Naive thymus-derived CD4-positive, alpha-beta T cell (primary cell): ENCODE measurements at regions of chr19 and their contacts with region 1.

Region 1: DNA sequence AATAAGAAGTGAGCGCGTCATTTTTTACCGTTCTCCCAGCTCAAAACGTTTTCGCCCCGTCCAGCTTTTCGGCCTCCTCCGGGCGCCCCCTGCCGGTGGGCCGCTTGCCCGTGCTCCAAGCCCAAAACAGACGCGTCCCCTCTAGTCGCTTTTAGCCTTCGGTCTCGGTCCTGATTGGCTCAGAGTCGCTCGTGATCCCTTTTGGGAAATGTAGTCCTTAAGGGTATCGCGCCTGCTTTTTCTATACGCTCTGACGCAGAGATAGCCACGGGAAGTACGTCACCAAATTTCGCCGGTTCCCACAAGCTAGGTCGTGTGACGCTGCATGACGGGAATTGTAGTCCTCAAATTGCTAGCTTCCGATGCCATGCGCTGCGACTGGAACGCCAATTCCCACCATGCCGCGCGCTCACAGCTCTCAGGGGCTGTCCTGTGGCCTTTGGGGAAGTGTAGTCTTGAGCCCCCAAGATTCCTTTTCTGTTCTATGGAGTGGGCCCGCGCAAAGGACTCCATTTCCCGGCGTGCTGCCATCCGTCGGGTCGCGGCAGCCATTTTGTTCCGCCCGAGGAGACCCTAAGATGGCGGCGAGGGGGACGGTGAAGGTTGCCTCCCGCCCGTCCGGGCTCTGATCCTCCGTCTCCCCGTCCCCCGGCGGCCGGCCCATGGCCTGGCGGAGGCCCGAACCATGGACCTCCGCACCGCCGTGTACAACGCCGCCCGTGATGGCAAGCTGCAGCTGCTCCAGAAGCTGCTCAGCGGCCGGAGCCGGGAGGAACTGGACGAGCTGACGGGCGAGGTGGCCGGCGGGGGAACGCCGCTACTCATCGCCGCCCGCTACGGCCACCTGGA is at the start of gene FEM1A:
- DNase-seq: peak; percentile 93 to 100 (median 99)
- ATAC-seq: peak; percentile 96
- H3K4me3 ChIP-seq: peak within 1 kb of the TSS; percentile 72
- H3K4me3 Mint-ChIP-seq: peak within 1 kb of the TSS; percentile 75 to 90 (median 87)
- H3K27ac ChIP-seq: peak within 1 kb of the TSS; percentile 92
- H3K27ac Mint-ChIP-seq: peak within 1 kb of the TSS; percentile 46 to 94 (median 85)
- H3K4me1 ChIP-seq: peaks cover 0 to 7% of the 10 kb centered on the region in 2 donors
- H3K4me1 Mint-ChIP-seq: peaks cover 7 to 46% (median 29%) of the 10 kb centered on the region in 7 donors
- H3K27me3 ChIP-seq: no peaks in the 10 kb centered on the region
- H3K27me3 Mint-ChIP-seq: no peaks in the 10 kb centered on the region
- total RNA-seq, gene FEM1A: 10.2 to 17.2 (median 14.4) TPM

Region 2: GRCh38 chr19:3185482-3186376 is 1605.7 kb before region 1 on chr19 and contains the start of gene NCLN:
- CTCF ChIA-PET with region 1: no interaction called
- POLR2A ChIA-PET with region 1: no interaction called
- intact Hi-C with region 1: loop called in 1 of 2 experiments (anchors 5 kb)
- DNase-seq: peak; percentile 92 to 98 (median 95)
- ATAC-seq: peak; percentile 94
- H3K4me3 ChIP-seq: peak within 1 kb of the TSS; percentile 71
- H3K4me3 Mint-ChIP-seq: peak within 1 kb of the TSS; percentile 86 to 99 (median 94)
- H3K27ac ChIP-seq: peak within 1 kb of the TSS; percentile 74
- H3K27ac Mint-ChIP-seq: peak within 1 kb of the TSS; percentile 89 to 99 (median 91)
- H3K4me1 ChIP-seq: peaks cover 53 to 63% of the 10 kb centered on the region in 2 donors
- H3K4me1 Mint-ChIP-seq: peaks cover 43 to 66% (median 54%) of the 10 kb centered on the region in 7 donors
- H3K27me3 ChIP-seq: no peaks in the 10 kb centered on the region
- H3K27me3 Mint-ChIP-seq: peaks cover 0 to 2% (median 0%) of the 10 kb centered on the region in 5 donors
- total RNA-seq, gene NCLN: 45.4 to 64.7 (median 53.7) TPM

Region 3: DNA sequence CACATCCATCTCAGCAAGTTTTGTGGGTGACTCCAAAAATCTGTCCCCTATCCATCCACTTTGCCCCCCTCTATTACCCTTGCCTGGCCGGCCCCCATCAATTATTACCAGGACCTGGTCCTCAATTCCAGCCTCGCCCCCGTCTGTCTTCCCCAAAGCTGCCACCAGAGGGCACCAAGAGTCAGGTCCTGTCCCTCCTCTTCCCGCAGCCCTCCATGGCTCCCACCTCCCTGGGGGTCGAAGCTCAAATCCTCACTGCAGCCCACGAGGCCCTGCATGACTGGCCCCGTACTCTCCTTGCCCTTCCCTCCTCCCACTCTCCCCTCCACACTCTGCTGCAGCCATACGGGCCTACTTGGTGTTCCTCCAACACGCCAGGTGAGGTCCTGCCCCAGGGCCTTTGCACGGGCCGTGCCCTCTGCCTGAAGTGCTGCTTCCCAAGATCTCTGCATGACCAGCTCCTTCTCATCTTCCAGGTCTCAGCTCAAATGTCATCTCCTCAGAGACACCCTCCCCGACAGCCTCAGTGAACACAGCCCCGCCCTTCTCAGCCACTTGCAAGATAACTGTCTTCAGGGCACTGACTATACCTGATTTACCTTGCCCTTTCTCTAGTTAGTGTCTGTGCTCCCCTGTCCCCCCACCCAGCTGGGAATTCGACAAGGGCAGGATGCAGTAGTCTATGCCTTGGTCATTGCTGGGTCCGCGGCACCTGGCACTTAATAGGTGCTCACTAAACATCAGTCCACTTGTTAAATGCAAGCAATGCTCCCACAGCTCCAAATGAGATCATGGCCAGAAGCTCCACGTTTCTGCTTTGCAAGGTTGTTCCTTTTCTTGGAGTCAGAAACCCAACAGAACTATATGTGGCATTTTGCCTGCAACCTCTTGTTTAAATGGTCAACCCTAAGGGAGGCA is 215.1 kb before region 1 on chr19:
- CTCF ChIA-PET with region 1: interaction called, 3 read pairs
- POLR2A ChIA-PET with region 1: no interaction called
- intact Hi-C with region 1: loop called (anchors 5 kb)
- DNase-seq: peak; percentile 20 to 75 (median 56)
- ATAC-seq: peak; percentile 67
- H3K4me3 ChIP-seq: no peak overlapping the region
- H3K4me3 Mint-ChIP-seq: no peak overlapping the region
- H3K27ac ChIP-seq: no peak overlapping the region
- H3K27ac Mint-ChIP-seq: peak overlapping the region in 1 of 9 donors; percentile 41
- H3K4me1 ChIP-seq: no peaks in the 10 kb centered on the region
- H3K4me1 Mint-ChIP-seq: peaks cover 0 to 3% (median 0%) of the 10 kb centered on the region in 7 donors
- H3K27me3 ChIP-seq: no peaks in the 10 kb centered on the region
- H3K27me3 Mint-ChIP-seq: peaks cover 29 to 56% (median 45%) of the 10 kb centered on the region in 5 donors

Region 4: GRCh38 chr19:4622695-4623421 is 168.5 kb before region 1 on chr19:
- CTCF ChIA-PET with region 1: no interaction called
- POLR2A ChIA-PET with region 1: no interaction called
- intact Hi-C with region 1: no loop called
- DNase-seq: no peak
- ATAC-seq: no peak
- H3K4me3 ChIP-seq: no peak overlapping the region
- H3K4me3 Mint-ChIP-seq: no peak overlapping the region
- H3K27ac ChIP-seq: no peak overlapping the region
- H3K27ac Mint-ChIP-seq: no peak overlapping the region
- H3K4me1 ChIP-seq: no peaks in the 10 kb centered on the region
- H3K4me1 Mint-ChIP-seq: peaks cover 0 to 3% (median 0%) of the 10 kb centered on the region in 7 donors
- H3K27me3 ChIP-seq: no peaks in the 10 kb centered on the region
- H3K27me3 Mint-ChIP-seq: peaks cover 0 to 30% (median 8%) of the 10 kb centered on the region in 5 donors

Region 5: GRCh38 chr19:4723367-4724187 is 67.8 kb before region 1 on chr19 and contains the start of gene DPP9:
- CTCF ChIA-PET with region 1: interaction called, 12 read pairs
- POLR2A ChIA-PET with region 1: interaction called, 42 read pairs
- intact Hi-C with region 1: loop called (anchors 1 kb)
- DNase-seq: peak; percentile 84 to 100 (median 99)
- ATAC-seq: peak; percentile 99
- H3K4me3 ChIP-seq: peak within 1 kb of the TSS; percentile 96
- H3K4me3 Mint-ChIP-seq: peak within 1 kb of the TSS; percentile 83 to 99 (median 95)
- H3K27ac ChIP-seq: peak within 1 kb of the TSS; percentile 87
- H3K27ac Mint-ChIP-seq: peak within 1 kb of the TSS; percentile 93 to 100 (median 98)
- H3K4me1 ChIP-seq: peaks cover 19 to 26% of the 10 kb centered on the region in 2 donors
- H3K4me1 Mint-ChIP-seq: peaks cover 21 to 48% (median 37%) of the 10 kb centered on the region in 7 donors
- H3K27me3 ChIP-seq: no peaks in the 10 kb centered on the region
- H3K27me3 Mint-ChIP-seq: peaks cover 0 to 10% (median 5%) of the 10 kb centered on the region in 5 donors
- total RNA-seq, gene DPP9: 71.2 to 90.7 (median 81.4) TPM

Region 6: DNA sequence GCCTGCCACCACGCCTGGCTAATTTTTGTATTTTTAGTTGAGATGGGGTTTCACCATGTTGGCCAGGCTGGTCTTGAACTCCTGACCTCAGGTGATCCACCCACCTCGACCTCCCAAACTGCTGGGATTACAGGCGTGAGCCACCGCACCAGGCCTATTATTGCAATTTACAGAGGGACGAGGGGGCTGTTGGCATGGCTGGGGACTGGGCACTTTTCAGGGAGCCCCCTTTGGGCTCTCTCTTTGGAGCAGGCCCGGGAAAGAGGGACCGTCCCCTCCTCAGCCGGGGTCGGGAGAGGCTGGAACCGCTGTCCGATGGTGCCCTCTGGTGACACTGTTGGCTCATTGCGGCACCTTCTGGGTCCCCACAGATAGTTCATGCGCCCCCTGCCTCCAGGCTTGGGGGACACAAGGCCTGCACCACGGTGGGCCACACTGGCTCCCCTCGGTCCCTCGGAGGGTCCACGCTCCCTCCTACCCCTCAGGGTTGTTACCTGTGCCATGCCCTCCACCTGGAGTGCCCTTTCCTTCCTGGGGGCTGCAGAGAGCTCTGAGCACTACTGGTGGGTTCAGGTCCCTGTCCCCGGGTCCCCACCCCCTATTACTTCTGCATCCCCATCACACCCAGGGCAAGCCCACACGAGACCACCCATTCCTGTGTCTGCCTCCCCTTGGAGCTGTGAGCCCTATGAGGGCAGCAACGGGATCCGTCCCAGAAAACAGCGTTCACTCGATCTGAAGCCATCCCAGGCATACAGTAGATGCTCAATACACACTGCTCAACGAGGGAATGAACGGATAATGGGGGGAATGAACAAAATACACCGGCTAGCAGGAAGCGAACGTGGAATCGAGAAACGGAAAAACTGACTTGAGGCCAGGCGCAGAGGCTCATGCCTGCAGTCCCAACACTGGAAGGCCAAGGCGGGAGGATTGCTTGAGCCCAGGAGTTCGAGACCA is 12.6 kb after region 1 on chr19:
- CTCF ChIA-PET with region 1: interaction called, 8 read pairs
- POLR2A ChIA-PET with region 1: interaction called, 5 read pairs
- intact Hi-C with region 1: loop called in 1 of 2 experiments (anchors 1 kb)
- DNase-seq: peak; percentile 38 to 64 (median 54)
- ATAC-seq: peak; percentile 94
- H3K4me3 ChIP-seq: no peak overlapping the region
- H3K4me3 Mint-ChIP-seq: peak overlapping the region in 4 of 10 donors; percentile 36 to 49 (median 45)
- H3K27ac ChIP-seq: no peak overlapping the region
- H3K27ac Mint-ChIP-seq: no peak overlapping the region
- H3K4me1 ChIP-seq: no peaks in the 10 kb centered on the region
- H3K4me1 Mint-ChIP-seq: peaks cover 0 to 3% (median 0%) of the 10 kb centered on the region in 7 donors
- H3K27me3 ChIP-seq: no peaks in the 10 kb centered on the region
- H3K27me3 Mint-ChIP-seq: no peaks in the 10 kb centered on the region

Region 7: DNA sequence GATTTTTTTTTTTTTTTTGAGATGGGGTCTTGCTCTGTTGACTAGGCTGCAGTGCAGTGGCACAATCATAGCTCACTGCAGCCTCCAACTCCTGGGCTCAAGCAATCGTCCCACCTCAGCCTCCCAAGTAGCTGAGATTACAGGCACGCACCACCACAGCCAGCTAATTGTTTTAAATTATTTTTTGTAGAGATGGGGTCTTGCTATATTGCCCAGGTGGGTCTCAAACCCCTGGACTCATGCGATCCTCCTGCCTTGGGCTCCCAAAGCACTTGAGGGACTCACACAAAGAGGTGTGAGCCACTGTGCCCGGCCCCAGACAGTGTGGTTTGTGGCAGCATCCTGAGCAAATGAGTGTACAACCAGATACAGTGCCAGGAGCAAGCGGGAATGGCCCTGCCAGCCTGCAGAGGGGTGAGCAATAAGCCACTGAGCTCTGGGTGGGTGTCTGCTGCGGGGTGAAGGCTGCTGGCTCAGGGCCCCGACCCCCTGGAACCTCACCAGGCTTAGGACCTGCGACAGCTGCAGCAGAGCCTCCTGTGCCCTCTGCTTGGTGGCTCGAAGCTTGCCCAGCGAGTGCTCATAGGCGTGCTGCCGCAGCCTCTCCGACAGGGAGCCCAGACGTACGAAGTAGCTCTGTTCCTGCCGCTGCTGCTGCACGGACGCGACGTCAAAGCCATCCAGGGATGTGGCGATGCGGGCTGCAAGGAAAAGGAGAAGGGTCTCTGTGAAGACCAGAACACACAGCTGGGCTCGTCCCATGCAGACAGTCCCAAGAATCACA is 56.0 kb after region 1 on chr19:
- CTCF ChIA-PET with region 1: no interaction called
- POLR2A ChIA-PET with region 1: no interaction called
- intact Hi-C with region 1: no loop called
- DNase-seq: no peak
- ATAC-seq: no peak
- H3K4me3 ChIP-seq: no peak overlapping the region
- H3K4me3 Mint-ChIP-seq: no peak overlapping the region
- H3K27ac ChIP-seq: no peak overlapping the region
- H3K27ac Mint-ChIP-seq: no peak overlapping the region
- H3K4me1 ChIP-seq: no peaks in the 10 kb centered on the region
- H3K4me1 Mint-ChIP-seq: peaks cover 0 to 3% (median 0%) of the 10 kb centered on the region in 7 donors
- H3K27me3 ChIP-seq: no peaks in the 10 kb centered on the region
- H3K27me3 Mint-ChIP-seq: no peaks in the 10 kb centered on the region

Region 8: DNA sequence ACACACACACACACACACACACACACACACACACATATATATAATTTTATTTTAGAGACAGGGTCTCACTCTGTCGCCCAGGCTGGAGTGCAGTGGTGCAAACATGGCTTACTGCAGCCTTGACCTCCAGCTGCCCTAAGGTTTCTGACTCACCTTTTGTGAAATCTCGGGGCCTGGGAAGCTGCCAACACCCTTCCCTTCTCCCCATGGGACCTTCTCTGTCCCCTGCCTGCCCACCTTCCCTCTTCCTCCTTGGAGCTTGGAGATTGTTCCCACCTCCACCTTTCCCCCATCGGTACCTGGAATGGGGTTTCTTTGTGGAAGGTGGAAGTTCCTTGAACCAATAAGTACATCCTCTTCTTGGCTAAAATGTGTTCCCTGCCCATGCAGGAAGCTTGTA is 105.0 kb after region 1 on chr19:
- CTCF ChIA-PET with region 1: no interaction called
- POLR2A ChIA-PET with region 1: no interaction called
- intact Hi-C with region 1: no loop called
- DNase-seq: no peak
- ATAC-seq: no peak
- H3K4me3 ChIP-seq: no peak overlapping the region
- H3K4me3 Mint-ChIP-seq: no peak overlapping the region
- H3K27ac ChIP-seq: no peak overlapping the region
- H3K27ac Mint-ChIP-seq: no peak overlapping the region
- H3K4me1 ChIP-seq: no peaks in the 10 kb centered on the region
- H3K4me1 Mint-ChIP-seq: peaks cover 0 to 9% (median 3%) of the 10 kb centered on the region in 7 donors
- H3K27me3 ChIP-seq: no peaks in the 10 kb centered on the region
- H3K27me3 Mint-ChIP-seq: no peaks in the 10 kb centered on the region

Region 9: GRCh38 chr19:4909897-4910593 is 118.7 kb after region 1 on chr19:
- CTCF ChIA-PET with region 1: interaction called, 6 read pairs
- POLR2A ChIA-PET with region 1: interaction called, 4 read pairs
- intact Hi-C with region 1: loop called (anchors 5 kb)
- DNase-seq: peak; percentile 88 to 96 (median 94)
- ATAC-seq: peak; percentile 95
- H3K4me3 ChIP-seq: peak overlapping the region; percentile 61
- H3K4me3 Mint-ChIP-seq: peak overlapping the region; percentile 93 to 100 (median 99)
- H3K27ac ChIP-seq: peak overlapping the region; percentile 67
- H3K27ac Mint-ChIP-seq: peak overlapping the region in 4 of 9 donors; percentile 86 to 99 (median 89)
- H3K4me1 ChIP-seq: peaks cover 48 to 54% of the 10 kb centered on the region in 2 donors
- H3K4me1 Mint-ChIP-seq: peaks cover 44 to 74% (median 58%) of the 10 kb centered on the region in 7 donors
- H3K27me3 ChIP-seq: no peaks in the 10 kb centered on the region
- H3K27me3 Mint-ChIP-seq: no peaks in the 10 kb centered on the region

Region 10: DNA sequence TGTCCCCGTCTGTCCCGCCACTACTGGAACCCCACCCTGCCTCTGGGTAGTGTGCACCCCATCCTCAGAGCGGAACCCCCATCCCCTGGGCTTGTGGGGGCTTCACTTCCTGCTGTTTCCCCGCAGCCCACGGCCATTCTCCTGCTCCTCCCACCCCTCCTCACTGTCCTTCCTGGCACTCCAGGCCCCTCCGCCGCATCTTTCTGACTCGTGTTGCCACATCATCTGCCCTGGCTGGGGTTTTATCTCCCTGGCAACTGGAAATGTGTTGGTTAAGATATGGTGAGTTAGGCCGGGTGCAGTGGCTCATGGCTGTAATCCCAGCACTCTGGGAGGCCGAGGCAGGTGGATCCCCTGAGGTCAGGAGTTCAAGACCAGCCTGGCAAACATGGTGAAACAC is 214.8 kb after region 1 on chr19:
- CTCF ChIA-PET with region 1: no interaction called
- POLR2A ChIA-PET with region 1: no interaction called
- intact Hi-C with region 1: no loop called
- DNase-seq: no peak
- ATAC-seq: no peak
- H3K4me3 ChIP-seq: no peak overlapping the region
- H3K4me3 Mint-ChIP-seq: no peak overlapping the region
- H3K27ac ChIP-seq: no peak overlapping the region
- H3K27ac Mint-ChIP-seq: no peak overlapping the region
- H3K4me1 ChIP-seq: no peaks in the 10 kb centered on the region
- H3K4me1 Mint-ChIP-seq: peaks cover 12 to 30% (median 19%) of the 10 kb centered on the region in 7 donors
- H3K27me3 ChIP-seq: no peaks in the 10 kb centered on the region
- H3K27me3 Mint-ChIP-seq: no peaks in the 10 kb centered on the region

Region 11: GRCh38 chr19:5719961-5720790 is 928.8 kb after region 1 on chr19 and contains the starts of genes CATSPERD and LONP1:
- CTCF ChIA-PET with region 1: no interaction called
- POLR2A ChIA-PET with region 1: interaction called, 3 read pairs
- intact Hi-C with region 1: loop called (anchors 1 kb)
- DNase-seq: peak; percentile 96 to 100 (median 98)
- ATAC-seq: peak; percentile 95
- H3K4me3 ChIP-seq: peak within 1 kb of the TSS; percentile 86
- H3K4me3 Mint-ChIP-seq: peak within 1 kb of the TSS; percentile 87 to 96 (median 93)
- H3K27ac ChIP-seq: peak within 1 kb of the TSS; percentile 97
- H3K27ac Mint-ChIP-seq: peak within 1 kb of the TSS; percentile 94 to 98 (median 95)
- H3K4me1 ChIP-seq: peaks cover 12 to 16% of the 10 kb centered on the region in 2 donors
- H3K4me1 Mint-ChIP-seq: peaks cover 9 to 42% (median 29%) of the 10 kb centered on the region in 7 donors
- H3K27me3 ChIP-seq: no peaks in the 10 kb centered on the region
- H3K27me3 Mint-ChIP-seq: peaks cover 0 to 2% (median 0%) of the 10 kb centered on the region in 5 donors
- total RNA-seq, gene CATSPERD: 0.07 TPM in 1 of 5 experiments, not detected in the others
- total RNA-seq, gene LONP1: 62.8 to 102 (median 74.8) TPM